ENCODE measurements at regions of chr21 and their contacts with region 1.

Region 1: DNA sequence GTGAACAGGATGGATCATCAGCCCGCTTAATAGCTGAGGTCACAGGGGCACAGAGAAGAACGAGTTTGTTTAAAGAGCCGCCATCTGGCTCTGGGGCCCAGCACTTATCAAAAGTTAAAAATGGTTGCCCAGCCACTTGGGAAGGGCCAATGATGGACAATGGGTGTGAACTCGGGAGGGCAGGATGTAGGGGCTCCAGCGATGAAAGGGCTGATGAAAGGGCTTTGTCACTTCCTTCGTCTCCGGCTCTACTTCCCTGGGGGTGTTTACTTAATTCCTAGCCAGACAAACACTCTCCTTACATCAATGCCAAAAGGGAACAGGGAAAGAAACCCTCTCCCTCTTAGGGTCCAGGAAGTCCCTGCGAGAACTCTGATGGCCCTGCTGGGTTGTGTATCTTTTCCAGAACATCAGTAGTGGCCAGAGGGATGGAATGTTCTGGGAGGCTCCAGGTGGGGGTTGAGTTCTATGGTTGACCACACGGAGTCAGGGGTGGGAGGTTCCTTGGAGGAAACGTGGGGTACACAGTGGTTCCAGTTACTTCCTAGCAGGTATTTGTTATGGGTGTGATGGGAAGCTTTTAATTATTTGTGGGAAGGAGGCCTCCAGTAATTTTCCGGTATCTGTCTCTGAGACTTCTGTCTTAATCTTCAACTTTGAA is 9.0 kb upstream of the ABCG1 start:
- DNase-seq: no peak
- H3K4me3 ChIP-seq: no peak overlapping the region
- H3K27ac ChIP-seq: no peak overlapping the region
- H3K4me1 ChIP-seq: no peaks in the 10 kb centered on the region
- H3K27me3 ChIP-seq: no peaks in the 10 kb centered on the region
- CTCF ChIP-seq: no peak
- EP300 ChIP-seq: no peak
- POLR2A ChIP-seq: no peak

Region 2: GRCh38 chr21:44039828-44040227 is 1829.9 kb after region 1 on chr21:
- in situ Hi-C with region 1: no loop called
- intact Hi-C with region 1: loop called (anchors 5 kb)
- DNase-seq: no peak
- H3K4me3 ChIP-seq: no peak overlapping the region
- H3K27ac ChIP-seq: no peak overlapping the region
- H3K4me1 ChIP-seq: no peaks in the 10 kb centered on the region
- H3K27me3 ChIP-seq: no peaks in the 10 kb centered on the region
- CTCF ChIP-seq: no peak
- EP300 ChIP-seq: no peak
- POLR2A ChIP-seq: no peak

Measured in transverse colon (tissue), 4 donors.